ENCODE measurements at regions of chr5 and their contacts with region 1.

Region 1: DNA sequence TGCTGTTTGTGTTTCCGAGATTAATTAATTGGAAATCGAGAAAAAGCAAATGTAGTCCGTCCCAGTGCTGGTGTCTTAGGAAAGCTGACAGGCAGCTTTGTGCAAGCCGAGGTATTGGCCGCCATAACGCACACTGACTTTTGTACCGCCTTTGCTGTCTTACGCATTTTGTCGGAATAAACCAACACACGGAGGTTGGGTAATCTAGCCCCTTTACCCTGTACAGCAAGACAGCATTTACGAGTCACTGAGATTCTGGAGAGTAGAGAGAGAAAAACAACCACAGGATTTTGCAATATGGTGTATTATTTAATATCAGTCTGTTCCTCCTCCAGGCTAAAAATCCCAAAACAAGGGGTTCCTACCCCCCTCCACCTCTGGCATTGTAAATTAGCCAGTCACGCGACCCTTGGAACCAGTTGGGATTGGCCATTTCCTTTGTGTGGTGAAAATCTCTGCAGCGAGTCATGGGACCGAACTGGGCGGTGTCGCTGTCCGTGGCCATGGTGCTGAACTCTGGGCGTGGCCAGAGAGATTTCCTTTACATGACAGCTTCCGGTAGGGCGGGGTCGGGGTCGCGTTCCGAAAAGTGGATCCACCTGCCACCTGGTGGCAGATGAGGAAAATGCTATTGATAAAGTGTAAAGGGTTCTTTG is 10.3 kb upstream of the PCDHB1 start:
- DNase-seq: peak; percentile 99
- H3K4me3 ChIP-seq: peak overlapping the region; percentile 69
- H3K27ac ChIP-seq: peak overlapping the region; percentile 98
- H3K4me1 ChIP-seq: peaks cover 22% of the 10 kb centered on the region
- H3K27me3 ChIP-seq: peaks cover 27% of the 10 kb centered on the region
- CTCF ChIP-seq: peak; percentile 79

Region 2: DNA sequence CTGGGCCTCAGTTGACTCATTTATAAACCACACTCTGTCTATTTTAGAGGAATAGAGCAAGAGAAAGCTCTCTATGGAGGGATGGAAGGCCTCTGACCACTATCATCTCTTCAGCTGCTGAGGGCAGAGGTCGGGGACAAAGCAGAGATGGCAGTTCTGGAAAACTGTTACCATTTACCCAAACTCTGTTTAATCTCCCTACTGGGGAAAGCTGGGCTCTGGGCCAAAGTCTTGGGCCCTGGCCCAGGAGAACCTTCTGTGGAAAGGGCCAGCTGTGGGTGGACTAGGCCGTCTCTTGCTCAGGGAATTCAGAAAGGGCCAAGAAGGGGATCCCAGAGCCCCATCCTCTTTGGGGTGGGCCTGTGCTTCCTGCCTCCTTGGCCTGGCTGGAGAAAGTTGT is 1145.3 kb before region 1 on chr5:
- CTCF ChIA-PET with region 1: no interaction called
- POLR2A ChIA-PET with region 1: no interaction called
- intact Hi-C with region 1: no loop called
- DNase-seq: no peak
- H3K4me3 ChIP-seq: no peak overlapping the region
- H3K27ac ChIP-seq: no peak overlapping the region
- H3K4me1 ChIP-seq: no peaks in the 10 kb centered on the region
- H3K27me3 ChIP-seq: peaks cover 21% of the 10 kb centered on the region
- CTCF ChIP-seq: no peak

Region 3: GRCh38 chr5:140855772-140856674 is 184.9 kb before region 1 on chr5 and contains the start of gene PCDHA10:
- CTCF ChIA-PET with region 1: interaction called, 17 read pairs
- POLR2A ChIA-PET with region 1: no interaction called
- intact Hi-C with region 1: no loop called
- DNase-seq: peak; percentile 79
- H3K4me3 ChIP-seq: peak within 1 kb of the TSS; percentile 63
- H3K27ac ChIP-seq: peak within 1 kb of the TSS; percentile 78
- H3K4me1 ChIP-seq: peaks cover 5% of the 10 kb centered on the region
- H3K27me3 ChIP-seq: no peaks in the 10 kb centered on the region
- CTCF ChIP-seq: peak; percentile 61
- total RNA-seq, gene PCDHA10: 11.5 and 11.6 TPM in 2 replicates

Region 4: GRCh38 chr5:140875066-140876065 is 165.5 kb before region 1 on chr5 and contains the start of gene PCDHA12:
- CTCF ChIA-PET with region 1: interaction called, 27 read pairs
- POLR2A ChIA-PET with region 1: no interaction called
- intact Hi-C with region 1: loop called (anchors 2 kb)
- DNase-seq: peak; percentile 81
- H3K4me3 ChIP-seq: peak within 1 kb of the TSS; percentile 56
- H3K27ac ChIP-seq: peak within 1 kb of the TSS; percentile 54
- H3K4me1 ChIP-seq: peaks cover 17% of the 10 kb centered on the region
- H3K27me3 ChIP-seq: no peaks in the 10 kb centered on the region
- CTCF ChIP-seq: peak; percentile 72
- total RNA-seq, gene PCDHA12: 10.5 and 10.7 TPM in 2 replicates

Region 5: GRCh38 chr5:140926443-140927227 is 114.3 kb before region 1 on chr5:
- CTCF ChIA-PET with region 1: interaction called, 67 read pairs
- POLR2A ChIA-PET with region 1: no interaction called
- intact Hi-C with region 1: loop called (anchors 1 kb)
- DNase-seq: peak; percentile 95
- H3K4me3 ChIP-seq: peak overlapping the region; percentile 73
- H3K27ac ChIP-seq: peak overlapping the region; percentile 47
- H3K4me1 ChIP-seq: peaks cover 6% of the 10 kb centered on the region
- H3K27me3 ChIP-seq: no peaks in the 10 kb centered on the region
- CTCF ChIP-seq: peak; percentile 98

Region 6: DNA sequence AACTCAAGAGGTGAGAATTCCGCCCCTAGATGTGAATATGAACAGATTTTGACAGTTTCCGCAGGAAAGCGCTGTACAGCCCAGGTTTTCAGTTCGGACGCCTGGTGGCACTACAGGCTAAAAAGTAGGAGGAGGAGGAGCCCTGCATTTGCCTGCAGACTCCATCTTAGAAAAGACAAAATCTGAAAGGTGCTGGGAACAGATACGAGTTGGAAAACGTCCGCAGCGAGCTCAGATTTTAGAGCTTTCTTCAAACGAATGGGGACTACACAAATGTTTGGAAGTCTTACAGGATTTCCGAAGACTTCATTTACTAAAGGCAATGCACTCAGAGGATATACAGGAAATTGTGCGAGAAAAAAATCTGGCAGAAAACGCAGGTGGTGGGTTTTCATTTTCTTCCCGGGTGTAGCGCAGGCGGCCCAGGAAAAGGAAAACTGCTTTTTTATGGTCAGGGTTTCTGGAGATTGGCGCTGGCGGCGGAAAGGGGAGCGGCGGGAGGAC is 43.6 kb after region 1 on chr5:
- CTCF ChIA-PET with region 1: no interaction called
- POLR2A ChIA-PET with region 1: no interaction called
- intact Hi-C with region 1: no loop called
- DNase-seq: peak; percentile 91
- H3K4me3 ChIP-seq: peak overlapping the region; percentile 55
- H3K27ac ChIP-seq: peak overlapping the region; percentile 86
- H3K4me1 ChIP-seq: peaks cover 11% of the 10 kb centered on the region
- H3K27me3 ChIP-seq: no peaks in the 10 kb centered on the region
- CTCF ChIP-seq: peak; percentile 85